GM13977 (cell line): ENCODE measurements at regions of chr17 and their contacts with region 1.

Region 1: GRCh38 chr17:63419949-63420867 is 25.9 kb downstream of the CYB561 start:
- DNase-seq: no peak
- CTCF ChIP-seq: no peak

Region 2: DNA sequence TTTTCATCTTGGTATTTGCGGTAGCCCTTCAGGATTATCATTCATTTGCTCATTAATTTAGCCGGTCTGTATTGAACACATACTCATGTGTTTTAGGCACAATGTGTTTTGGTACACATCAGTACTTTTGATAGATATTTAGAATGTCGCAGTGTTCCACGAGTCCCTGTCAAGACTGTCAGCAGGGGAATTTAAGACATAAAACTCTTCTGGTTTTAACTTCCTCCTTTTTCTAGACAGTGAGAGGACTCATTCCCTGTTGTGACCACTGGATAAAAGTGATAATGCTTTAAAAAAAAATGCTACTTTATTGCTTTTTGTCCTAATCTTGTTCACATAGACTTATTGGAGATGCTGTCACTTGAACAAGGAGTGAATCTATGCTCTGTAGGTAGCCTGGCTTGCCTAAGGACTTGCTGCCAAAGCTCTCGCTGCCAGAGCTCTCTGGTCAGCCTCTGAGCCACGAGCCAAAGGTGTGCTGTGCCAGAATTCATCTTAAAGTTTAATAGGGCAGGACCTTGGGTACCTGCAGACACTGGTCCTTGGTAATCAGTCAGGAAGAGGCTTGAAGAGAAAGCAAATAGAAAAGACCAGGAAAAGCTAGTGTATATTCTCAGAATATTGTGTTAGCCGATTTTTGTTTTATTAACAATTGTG is 135.4 kb after region 1 on chr17:
- in situ Hi-C with region 1: no loop called
- DNase-seq: no peak
- CTCF ChIP-seq: no peak

Region 3: GRCh38 chr17:63621766-63622519 is 201.7 kb after region 1 on chr17 and contains the start of gene MAP3K3:
- in situ Hi-C with region 1: loop called (anchors 5 kb)
- DNase-seq: peak; percentile 99
- CTCF ChIP-seq: peak; percentile 28